OCI-LY7 (cell line): ENCODE measurements at regions of chr1 and their contacts with region 1.

Region 1: DNA sequence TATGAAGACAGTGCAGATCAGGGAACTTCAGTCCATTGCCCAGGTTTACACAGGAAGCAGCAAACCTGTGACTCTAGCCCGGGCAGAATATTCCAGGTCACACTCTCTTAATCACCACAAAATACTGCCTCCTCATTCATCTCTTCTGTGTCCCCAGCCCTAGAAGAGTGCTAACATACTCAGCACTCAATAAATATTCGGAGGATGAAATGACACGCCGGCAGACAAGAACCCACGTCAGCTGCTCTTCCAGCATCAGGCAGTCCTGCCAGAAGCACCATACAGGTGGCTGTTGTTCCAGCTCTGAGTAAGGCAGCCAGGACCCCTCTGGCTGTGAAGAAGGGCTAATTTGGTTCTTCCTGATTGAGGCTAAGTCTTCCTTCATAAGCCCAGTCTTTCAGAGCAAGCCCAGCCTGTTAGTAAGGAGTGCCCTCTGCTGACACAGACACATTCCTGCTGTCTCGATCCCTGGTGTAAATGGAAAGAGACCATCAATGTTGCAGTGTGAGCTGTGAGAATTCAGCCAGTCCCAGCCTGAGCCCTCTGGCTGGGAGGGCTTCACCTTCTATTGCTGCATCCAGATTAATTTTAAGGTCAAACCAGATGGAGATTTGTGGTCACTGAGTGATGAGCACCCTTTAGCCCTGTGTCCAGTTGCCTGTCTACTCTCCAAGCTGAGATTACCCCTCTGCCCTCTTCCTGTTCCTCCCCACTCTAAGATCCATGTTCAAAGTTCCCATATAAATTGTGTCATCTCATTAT is 45.0 kb upstream of the KIRREL1 start:
- DNase-seq: peak; percentile 84
- H3K4me3 ChIP-seq: no peak overlapping the region
- H3K27ac ChIP-seq: no peak overlapping the region
- H3K4me1 ChIP-seq: peaks cover 23% of the 10 kb centered on the region
- CTCF ChIP-seq: peak; percentile 90

Region 2: DNA sequence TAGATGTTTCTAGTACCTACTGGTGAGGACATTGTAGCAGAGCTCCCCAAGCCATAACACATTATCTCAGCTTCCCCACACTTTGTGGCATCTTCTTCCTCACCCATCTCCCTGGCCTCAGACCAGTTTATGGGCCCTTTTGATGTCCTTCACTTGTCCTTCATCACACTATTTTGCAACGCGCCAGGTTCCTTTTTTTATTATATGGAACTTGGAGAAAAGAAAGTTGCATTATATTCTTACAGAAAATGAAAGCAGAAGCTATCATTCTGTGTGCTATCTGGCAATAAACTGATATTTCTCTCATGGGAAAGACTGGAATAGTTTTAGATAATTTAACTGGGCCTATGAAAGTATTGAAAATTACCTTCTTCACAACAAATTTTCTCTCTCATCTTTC is 613.4 kb before region 1 on chr1:
- CTCF ChIA-PET with region 1: no interaction called
- POLR2A ChIA-PET with region 1: no interaction called
- intact Hi-C with region 1: no loop called
- DNase-seq: no peak
- H3K4me3 ChIP-seq: no peak overlapping the region
- H3K27ac ChIP-seq: no peak overlapping the region
- H3K4me1 ChIP-seq: no peaks in the 10 kb centered on the region
- CTCF ChIP-seq: no peak

Region 3: GRCh38 chr1:157369808-157370521 is 578.5 kb before region 1 on chr1:
- CTCF ChIA-PET with region 1: no interaction called
- POLR2A ChIA-PET with region 1: no interaction called
- intact Hi-C with region 1: loop called (anchors 1 kb)
- DNase-seq: peak; percentile 71
- H3K4me3 ChIP-seq: no peak overlapping the region
- H3K27ac ChIP-seq: no peak overlapping the region
- H3K4me1 ChIP-seq: no peaks in the 10 kb centered on the region
- CTCF ChIP-seq: peak; percentile 93

Region 4: GRCh38 chr1:157490467-157491165 is 457.9 kb before region 1 on chr1:
- CTCF ChIA-PET with region 1: no interaction called
- POLR2A ChIA-PET with region 1: no interaction called
- intact Hi-C with region 1: loop called (anchors 5 kb)
- DNase-seq: peak; percentile 73
- H3K4me3 ChIP-seq: no peak overlapping the region
- H3K27ac ChIP-seq: no peak overlapping the region
- H3K4me1 ChIP-seq: peaks cover 11% of the 10 kb centered on the region
- CTCF ChIP-seq: peak; percentile 80

Region 5: DNA sequence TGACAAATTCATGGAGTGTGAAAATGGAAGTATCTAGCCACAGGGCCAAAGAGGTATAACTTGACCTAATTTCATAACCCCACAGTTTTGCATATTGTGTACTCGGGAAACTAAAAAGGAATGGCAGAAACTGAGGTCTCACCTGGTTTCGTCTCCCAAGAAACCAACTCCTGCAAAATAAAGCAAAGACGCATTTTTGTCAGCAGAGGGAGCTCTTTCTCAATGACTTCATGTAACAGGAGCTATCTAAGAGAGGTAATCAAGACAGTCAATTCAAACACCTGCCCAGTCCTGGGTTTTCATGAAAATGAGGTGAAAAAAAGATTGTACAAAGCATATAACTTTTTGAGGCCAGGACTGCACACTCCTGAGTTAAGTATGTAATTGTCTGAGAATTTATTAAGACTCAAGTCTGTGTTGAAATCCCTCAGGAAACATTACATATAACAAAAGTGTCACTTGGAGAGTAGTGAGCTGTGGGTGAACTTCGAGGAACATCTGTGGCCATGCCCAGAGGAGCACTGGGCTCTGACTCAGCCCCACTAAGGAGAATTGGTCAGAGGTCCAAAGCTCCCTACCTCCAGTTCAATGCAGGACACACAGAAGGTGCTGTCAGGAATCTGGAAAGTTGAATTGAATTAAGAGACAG is 368.2 kb before region 1 on chr1:
- CTCF ChIA-PET with region 1: interaction called, 3 read pairs
- POLR2A ChIA-PET with region 1: no interaction called
- intact Hi-C with region 1: loop called (anchors 1 kb)
- DNase-seq: peak; percentile 86
- H3K4me3 ChIP-seq: no peak overlapping the region
- H3K27ac ChIP-seq: no peak overlapping the region
- H3K4me1 ChIP-seq: peaks cover 44% of the 10 kb centered on the region
- CTCF ChIP-seq: peak; percentile 97

Region 6: DNA sequence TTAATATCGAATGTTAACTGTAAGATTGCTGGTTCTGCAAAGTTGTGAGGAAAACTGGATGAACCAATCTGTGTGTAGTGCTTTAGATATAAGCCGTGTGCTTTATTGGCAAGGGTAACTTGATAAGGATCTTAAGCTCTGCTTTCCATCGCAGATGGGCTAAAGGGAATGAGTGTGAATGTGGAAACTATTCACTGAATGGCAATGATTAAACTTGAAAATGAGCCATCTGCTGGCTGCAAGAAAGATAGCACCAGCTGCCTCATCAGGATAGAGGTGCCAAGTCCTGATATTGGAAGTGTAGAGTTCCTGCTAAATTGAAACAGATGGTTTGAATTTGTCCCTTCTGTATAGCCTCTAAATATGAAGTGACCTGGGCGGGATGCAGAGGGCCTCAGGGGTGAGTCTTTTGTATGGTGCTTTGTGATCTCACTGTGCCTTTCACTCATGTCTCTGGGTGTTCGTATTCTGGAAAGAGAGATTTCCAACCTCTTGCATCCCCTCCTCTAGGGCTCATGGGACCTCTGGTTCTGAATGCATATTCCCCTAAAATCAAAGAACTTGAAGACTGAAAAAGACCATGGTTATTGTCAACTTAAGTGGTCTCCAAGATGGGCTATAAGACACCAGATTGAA is 257.1 kb before region 1 on chr1:
- CTCF ChIA-PET with region 1: no interaction called
- POLR2A ChIA-PET with region 1: no interaction called
- intact Hi-C with region 1: loop called (anchors 2 kb)
- DNase-seq: peak; percentile 67
- H3K4me3 ChIP-seq: no peak overlapping the region
- H3K27ac ChIP-seq: no peak overlapping the region
- H3K4me1 ChIP-seq: peaks cover 21% of the 10 kb centered on the region
- CTCF ChIP-seq: peak; percentile 93

Region 7: DNA sequence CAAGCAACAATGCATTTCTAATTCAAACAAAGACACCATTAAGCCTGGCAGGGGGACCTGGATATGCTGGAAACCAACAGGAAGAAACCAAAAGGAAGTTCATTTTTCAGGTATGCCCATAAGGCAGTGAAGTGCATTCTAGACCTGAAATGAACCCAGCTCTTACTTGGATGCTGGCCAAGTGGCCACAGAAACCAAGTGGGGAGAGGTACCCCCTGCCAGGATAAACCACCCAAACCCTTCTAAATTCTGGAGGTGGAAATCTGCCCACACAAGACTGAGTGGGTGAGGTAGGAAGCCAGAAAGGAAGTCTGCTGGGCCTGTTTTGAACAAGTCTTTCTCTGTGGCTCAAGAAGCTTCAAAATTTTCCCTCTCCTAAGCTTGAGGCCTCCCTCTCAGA is 109.5 kb before region 1 on chr1:
- CTCF ChIA-PET with region 1: no interaction called
- POLR2A ChIA-PET with region 1: no interaction called
- intact Hi-C with region 1: no loop called
- DNase-seq: peak; percentile 43
- H3K4me3 ChIP-seq: no peak overlapping the region
- H3K27ac ChIP-seq: no peak overlapping the region
- H3K4me1 ChIP-seq: peaks cover 37% of the 10 kb centered on the region
- CTCF ChIP-seq: no peak

Region 8: DNA sequence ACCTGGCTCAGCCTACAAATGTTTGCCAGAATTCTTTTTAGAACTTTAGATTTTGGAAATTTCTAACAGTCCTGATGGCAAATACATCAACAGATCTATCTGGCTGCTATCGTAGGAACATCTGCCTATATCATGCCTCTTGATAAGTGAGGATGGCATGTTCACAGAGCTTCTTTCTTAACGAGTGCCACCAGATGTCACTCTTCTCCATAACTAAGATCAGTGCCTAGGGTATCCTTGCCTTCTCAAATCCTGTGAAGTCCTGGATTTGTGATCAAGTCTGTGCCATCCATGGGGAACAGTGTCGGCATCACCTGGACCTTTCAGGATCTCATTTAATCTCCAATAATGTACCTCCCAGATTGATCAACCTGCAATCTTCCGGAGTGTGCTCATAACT is 70.4 kb before region 1 on chr1:
- CTCF ChIA-PET with region 1: no interaction called
- POLR2A ChIA-PET with region 1: no interaction called
- intact Hi-C with region 1: loop called (anchors 1 kb)
- DNase-seq: peak; percentile 66
- H3K4me3 ChIP-seq: no peak overlapping the region
- H3K27ac ChIP-seq: no peak overlapping the region
- H3K4me1 ChIP-seq: peaks cover 6% of the 10 kb centered on the region
- CTCF ChIP-seq: peak; percentile 87

Region 9: DNA sequence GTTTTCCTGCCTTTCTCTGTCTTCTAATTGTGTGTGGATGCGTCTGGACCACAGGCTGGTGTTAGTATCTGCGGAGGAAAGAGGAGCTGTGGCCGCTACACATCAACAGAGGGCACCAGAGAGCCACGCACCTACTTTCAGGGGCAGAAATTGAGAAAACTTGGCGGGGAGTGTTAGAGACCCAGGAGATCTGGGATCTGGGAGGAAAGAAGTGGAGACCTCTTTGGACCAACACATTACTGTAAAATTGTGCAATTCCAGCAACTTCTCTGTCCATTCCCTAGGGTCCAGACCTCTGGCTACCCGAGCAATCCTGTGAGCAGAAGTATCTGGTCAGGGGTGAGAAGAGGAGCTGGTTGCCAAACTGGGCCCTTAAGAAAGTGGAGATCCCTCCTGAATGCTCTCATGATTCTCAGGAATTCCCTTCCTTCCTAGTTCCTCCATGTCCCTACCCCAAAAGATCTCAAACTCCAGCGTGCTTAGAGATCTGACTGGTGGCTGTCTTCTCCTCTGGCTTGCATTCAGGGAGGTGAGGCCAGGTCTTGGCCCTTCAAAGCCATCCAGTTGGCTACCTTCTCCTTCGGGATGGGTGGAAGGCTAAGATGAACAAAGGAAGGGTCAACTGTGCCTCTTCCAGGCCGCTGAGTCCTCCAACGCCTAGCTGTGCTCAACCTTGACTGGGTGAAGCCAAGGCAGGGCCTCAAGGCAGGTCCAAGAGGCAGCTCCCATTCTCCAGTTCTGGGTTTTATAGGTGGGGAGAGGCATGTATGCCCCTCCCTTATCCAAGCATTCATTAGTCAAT is 43.7 kb after region 1 on chr1:
- CTCF ChIA-PET with region 1: no interaction called
- POLR2A ChIA-PET with region 1: no interaction called
- intact Hi-C with region 1: no loop called
- DNase-seq: peak; percentile 53
- H3K4me3 ChIP-seq: no peak overlapping the region
- H3K27ac ChIP-seq: no peak overlapping the region
- H3K4me1 ChIP-seq: no peaks in the 10 kb centered on the region
- CTCF ChIP-seq: peak; percentile 95

Region 10: GRCh38 chr1:158124999-158125398 is 176.5 kb after region 1 on chr1:
- CTCF ChIA-PET with region 1: no interaction called
- POLR2A ChIA-PET with region 1: no interaction called
- intact Hi-C with region 1: no loop called
- DNase-seq: peak; percentile 86
- H3K4me3 ChIP-seq: no peak overlapping the region
- H3K27ac ChIP-seq: no peak overlapping the region
- H3K4me1 ChIP-seq: no peaks in the 10 kb centered on the region
- CTCF ChIP-seq: peak; percentile 92